Dendritic cell treated with granulocyte-macrophage colony-stimulating factor and Interleukin-4, amounts not matched to agents 40 ng/mL and 50 ng/mL, for 4 days (primary cell): ENCODE measurements at regions of chr14 and their contacts with region 1.

Region 1: GRCh38 chr14:49620182-49621113 is at the starts of genes MGAT2 and RPL36AL:
- H3K4me3 Mint-ChIP-seq: peak within 1 kb of the TSS; percentile 99
- H3K27ac Mint-ChIP-seq: peak within 1 kb of the TSS; percentile 100
- H3K4me1 Mint-ChIP-seq: peaks cover 27% of the 10 kb centered on the region
- H3K27me3 Mint-ChIP-seq: no peaks in the 10 kb centered on the region

Region 2: DNA sequence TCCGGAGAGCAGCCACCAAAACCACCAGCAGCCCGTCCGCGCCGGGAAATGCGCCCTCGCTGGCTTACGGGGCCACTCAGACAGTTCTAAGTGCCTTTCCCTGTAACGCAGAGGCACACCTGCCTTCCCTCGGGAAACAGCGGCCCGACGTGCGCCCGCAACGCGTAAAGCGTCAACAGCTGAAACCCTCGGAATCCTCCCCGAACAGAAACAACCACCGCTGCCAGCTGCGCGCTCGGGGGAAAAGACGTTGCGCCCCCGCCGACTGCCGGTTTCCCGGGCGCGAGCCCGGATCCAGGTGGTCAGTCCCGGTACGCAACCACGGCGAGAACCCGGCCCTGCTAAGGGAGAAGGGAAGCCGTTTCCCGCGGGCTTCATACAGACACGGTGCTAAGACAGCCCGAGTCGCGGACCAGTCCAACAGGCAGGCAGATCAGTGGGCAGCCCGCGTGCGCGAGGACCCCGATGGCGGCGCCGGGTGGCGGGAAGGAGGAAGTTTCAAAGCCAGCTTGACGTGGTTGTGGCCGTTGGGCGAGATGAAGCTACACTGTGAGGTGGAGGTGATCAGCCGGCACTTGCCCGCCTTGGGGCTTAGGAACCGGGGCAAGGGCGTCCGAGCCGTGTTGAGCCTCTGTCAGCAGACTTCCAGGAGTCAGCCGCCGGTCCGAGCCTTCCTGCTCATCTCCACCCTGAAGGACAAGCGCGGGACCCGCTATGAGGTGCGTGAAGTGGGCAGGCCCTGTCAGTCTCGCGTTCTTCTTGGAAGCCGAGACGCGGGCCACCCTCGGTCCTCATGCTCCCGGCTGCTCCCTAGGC is 21.8 kb before region 1 on chr14 and contains the start of gene LRR1:
- intact Hi-C with region 1: loop called (anchors 1 kb)
- H3K4me3 Mint-ChIP-seq: peak within 1 kb of the TSS; percentile 88
- H3K27ac Mint-ChIP-seq: peak within 1 kb of the TSS; percentile 98
- H3K4me1 Mint-ChIP-seq: peaks cover 25% of the 10 kb centered on the region
- H3K27me3 Mint-ChIP-seq: no peaks in the 10 kb centered on the region

Region 3: GRCh38 chr14:49687942-49688700 is 67.7 kb after region 1 on chr14 and contains the start of gene POLE2:
- intact Hi-C with region 1: no loop called
- H3K4me3 Mint-ChIP-seq: peak within 1 kb of the TSS; percentile 81
- H3K27ac Mint-ChIP-seq: peak within 1 kb of the TSS; percentile 86
- H3K4me1 Mint-ChIP-seq: peaks cover 37% of the 10 kb centered on the region
- H3K27me3 Mint-ChIP-seq: no peaks in the 10 kb centered on the region